Activated T-helper 2 cell treated with anti-CD3 and anti-CD28 coated beads, Interferon-gamma antibody, Interleukin-2, Interleukin-4, amounts not matched to agents 10 μg/mL and 5 μg/mL and 100 μg/mL, durations not matched to agents 14 hours and 24 hours and 36 hours (primary cell): ENCODE measurements at regions of chr12 and their contacts with region 1.

Region 1: GRCh38 chr12:14257734-14258574 is 107.5 kb upstream of the ATF7IP start:
- DNase-seq: peak; percentile 84
- H3K4me3 Mint-ChIP-seq: peak overlapping the region; percentile 60
- H3K27ac Mint-ChIP-seq: peak overlapping the region; percentile 95
- H3K4me1 Mint-ChIP-seq: peaks cover 48% of the 10 kb centered on the region
- H3K27me3 Mint-ChIP-seq: no peaks in the 10 kb centered on the region

Region 2: GRCh38 chr12:14239350-14239934 is 18.5 kb before region 1 on chr12:
- intact Hi-C with region 1: loop called (anchors 1 kb)
- DNase-seq: no peak
- H3K4me3 Mint-ChIP-seq: peak overlapping the region; percentile 73
- H3K27ac Mint-ChIP-seq: peak overlapping the region; percentile 86
- H3K4me1 Mint-ChIP-seq: peaks cover 25% of the 10 kb centered on the region
- H3K27me3 Mint-ChIP-seq: no peaks in the 10 kb centered on the region

Region 3: GRCh38 chr12:14272956-14273907 is 15.3 kb after region 1 on chr12:
- intact Hi-C with region 1: no loop called
- DNase-seq: no peak
- H3K4me3 Mint-ChIP-seq: no peak overlapping the region
- H3K27ac Mint-ChIP-seq: no peak overlapping the region
- H3K4me1 Mint-ChIP-seq: peaks cover 20% of the 10 kb centered on the region
- H3K27me3 Mint-ChIP-seq: no peaks in the 10 kb centered on the region

Region 4: GRCh38 chr12:14394317-14395073 is 136.5 kb after region 1 on chr12:
- intact Hi-C with region 1: loop called (anchors 1 kb)
- DNase-seq: peak; percentile 42
- H3K4me3 Mint-ChIP-seq: peak overlapping the region; percentile 89
- H3K27ac Mint-ChIP-seq: peak overlapping the region; percentile 92
- H3K4me1 Mint-ChIP-seq: peaks cover 67% of the 10 kb centered on the region
- H3K27me3 Mint-ChIP-seq: no peaks in the 10 kb centered on the region

Region 5: DNA sequence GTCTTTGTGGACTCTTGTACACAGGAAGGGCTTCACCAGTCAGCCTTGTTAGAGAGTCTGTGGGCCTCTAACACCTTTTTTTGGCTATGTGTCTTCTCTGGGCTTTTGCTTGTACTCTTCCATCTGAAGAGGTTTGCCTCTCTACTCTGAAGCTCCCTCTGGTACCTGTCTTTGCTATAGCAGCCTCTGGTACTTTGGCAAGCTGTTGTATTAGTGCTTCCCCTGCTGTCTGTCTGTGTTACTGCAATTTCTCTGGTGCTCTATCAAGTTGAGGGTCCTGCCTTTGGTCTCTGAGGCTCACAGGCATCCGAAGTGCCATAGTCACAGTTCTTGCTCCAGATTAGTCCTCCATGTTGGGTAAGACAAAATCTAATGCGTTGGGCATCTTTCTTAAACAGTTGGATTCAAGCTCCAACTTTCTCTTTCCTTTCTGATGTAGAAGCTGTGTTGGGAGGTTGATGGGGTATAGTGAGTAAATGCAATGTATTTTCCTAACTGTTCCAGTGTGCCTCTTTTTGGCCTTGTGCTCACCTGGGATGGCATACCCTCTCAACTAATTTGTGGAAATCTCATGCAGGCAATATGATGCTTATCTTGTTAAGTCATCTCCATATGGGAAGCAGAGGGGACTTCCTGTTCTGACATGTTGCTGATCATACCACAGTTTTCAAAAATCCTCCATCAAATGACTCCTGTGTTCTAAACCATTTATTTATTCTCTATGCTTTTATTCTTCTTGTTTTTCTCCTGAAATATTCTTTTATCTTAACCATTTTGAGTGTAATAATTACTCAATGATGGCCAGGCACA is 196.3 kb after region 1 on chr12:
- intact Hi-C with region 1: loop called (anchors 1 kb)
- DNase-seq: peak; percentile 28
- H3K4me3 Mint-ChIP-seq: no peak overlapping the region
- H3K27ac Mint-ChIP-seq: peak overlapping the region; percentile 83
- H3K4me1 Mint-ChIP-seq: peaks cover 49% of the 10 kb centered on the region
- H3K27me3 Mint-ChIP-seq: no peaks in the 10 kb centered on the region